CD14-positive monocyte (primary cell): ENCODE measurements at regions of chr19 and their contacts with region 1.

Region 1: DNA sequence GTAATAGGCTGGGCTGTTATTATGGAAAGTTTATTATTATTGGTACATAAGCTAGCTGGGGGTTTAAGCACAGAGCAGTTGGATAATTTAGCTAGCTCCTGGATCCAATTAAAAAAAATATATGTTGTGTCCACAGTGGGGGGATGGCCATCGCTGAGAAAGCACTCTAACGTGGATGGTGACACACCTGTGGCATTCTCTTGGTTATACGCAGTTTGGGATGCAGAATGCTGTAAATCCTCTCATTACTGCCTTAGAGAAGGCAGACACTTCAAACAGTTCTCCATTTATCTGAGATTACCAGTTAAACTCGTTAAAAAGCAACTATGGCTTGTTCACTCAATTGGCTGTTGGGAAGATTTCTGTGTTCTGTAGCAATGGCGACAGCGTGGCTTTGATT is 2.4 kb upstream of the ZNF536 start:
- DNase-seq: no peak
- H3K4me3 ChIP-seq: no peak overlapping the region
- H3K4me3 Mint-ChIP-seq: no peak overlapping the region
- H3K27ac ChIP-seq: no peak overlapping the region
- H3K27ac Mint-ChIP-seq: no peak overlapping the region
- H3K4me1 ChIP-seq: no peaks in the 10 kb centered on the region
- H3K4me1 Mint-ChIP-seq: no peaks in the 10 kb centered on the region
- H3K27me3 ChIP-seq: peaks cover 10 to 23% of the 10 kb centered on the region in 2 donors
- H3K27me3 Mint-ChIP-seq: peaks cover 18 to 31% (median 26%) of the 10 kb centered on the region in 3 donors
- CTCF ChIP-seq: no peak

Region 2: DNA sequence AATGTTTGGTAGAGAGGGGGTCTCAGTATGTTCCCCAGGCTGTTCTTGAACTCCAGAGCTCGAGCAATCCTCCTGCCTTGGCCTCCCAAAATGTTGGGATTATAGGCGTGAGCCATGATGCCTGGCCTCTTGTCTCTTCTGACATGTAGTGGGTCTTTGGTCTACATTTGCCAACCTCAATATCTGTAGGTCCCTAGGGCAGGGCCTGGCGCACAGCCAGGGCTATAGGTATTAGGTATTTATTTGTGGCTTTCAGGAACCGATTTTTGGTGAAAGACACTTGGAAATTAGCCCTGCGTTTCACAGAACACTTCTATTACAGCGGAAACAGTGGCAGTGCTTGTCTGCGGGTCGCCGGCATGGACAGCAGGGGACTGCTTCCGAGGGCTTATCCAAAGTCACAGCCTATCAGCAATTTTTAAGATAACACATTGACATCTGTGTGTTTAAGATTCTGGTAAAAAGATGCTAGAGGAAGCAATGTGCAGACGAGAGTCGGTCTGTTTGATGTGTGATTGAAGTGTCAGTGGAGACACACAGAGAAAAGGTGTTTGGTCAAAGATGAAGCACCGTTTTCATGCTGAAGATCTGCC is 16.8 kb after region 1 on chr19:
- intact Hi-C with region 1: loop called in 1 of 2 experiments (anchors 1 kb)
- DNase-seq: no peak
- H3K4me3 ChIP-seq: no peak overlapping the region
- H3K4me3 Mint-ChIP-seq: no peak overlapping the region
- H3K27ac ChIP-seq: no peak overlapping the region
- H3K27ac Mint-ChIP-seq: peak overlapping the region in 1 of 7 donors; percentile 31
- H3K4me1 ChIP-seq: no peaks in the 10 kb centered on the region
- H3K4me1 Mint-ChIP-seq: no peaks in the 10 kb centered on the region
- H3K27me3 ChIP-seq: no peaks in the 10 kb centered on the region
- H3K27me3 Mint-ChIP-seq: peaks cover 8 to 11% (median 11%) of the 10 kb centered on the region in 3 donors
- CTCF ChIP-seq: no peak